Activated CD8-positive, alpha-beta memory T cell treated with anti-CD3 and anti-CD28 coated beads, Interleukin-2, amount 10 ng/mL, durations not matched to agents 7 days and 5 days (primary cell): ENCODE measurements at regions of chr18 and their contacts with region 1.

Region 1: DNA sequence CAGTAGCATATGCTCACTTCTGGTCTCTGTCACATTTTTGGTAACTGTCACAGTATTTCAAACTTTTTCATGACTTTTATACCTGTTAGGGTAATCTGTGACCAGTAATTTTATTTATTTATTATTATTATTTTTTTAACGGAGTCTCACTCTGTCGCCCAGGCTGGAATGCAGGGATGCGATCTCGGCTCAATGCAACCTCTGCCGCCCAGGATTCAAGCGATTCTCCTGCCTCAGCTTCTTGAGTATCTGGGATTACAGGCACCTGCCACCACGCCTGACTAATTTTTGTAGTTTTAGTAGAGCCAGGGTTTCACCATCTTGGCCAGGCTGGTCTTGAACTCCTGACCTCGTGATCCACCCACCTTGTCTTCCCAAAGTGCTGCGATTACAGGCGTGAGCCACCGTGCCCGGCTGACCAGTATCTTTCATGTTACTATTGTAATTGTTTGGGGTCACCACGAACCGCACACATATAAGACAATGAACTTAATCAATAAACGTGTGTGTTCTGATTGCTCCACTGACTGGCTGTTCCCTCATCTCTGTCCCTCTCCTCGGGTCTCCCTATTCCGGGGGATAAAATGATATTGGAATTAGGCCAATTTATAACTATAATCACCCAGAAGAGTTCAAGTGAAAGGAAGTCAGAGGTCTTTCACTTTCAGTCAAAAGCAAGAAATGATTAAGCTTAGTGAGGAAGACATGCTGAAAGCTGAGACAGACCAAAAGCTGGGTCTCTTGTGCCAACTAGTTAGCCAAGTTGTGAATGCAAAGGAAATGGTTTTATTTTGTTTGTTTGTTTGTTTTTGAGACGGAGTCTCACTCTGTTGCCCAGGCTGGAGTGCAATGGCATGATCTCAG is 22.9 kb downstream of the TGIF1 start:
- DNase-seq: no peak
- ATAC-seq: peak; percentile 84
- H3K4me3 Mint-ChIP-seq: no peak overlapping the region
- H3K27ac Mint-ChIP-seq: no peak overlapping the region
- H3K4me1 Mint-ChIP-seq: peaks cover 13% of the 10 kb centered on the region
- H3K27me3 Mint-ChIP-seq: peaks cover 9% of the 10 kb centered on the region

Region 2: GRCh38 chr18:3454365-3455089 is 18.4 kb before region 1 on chr18:
- CTCF ChIA-PET with region 1: interaction called, 11 read pairs
- DNase-seq: peak; percentile 63
- ATAC-seq: no peak
- H3K4me3 Mint-ChIP-seq: peak overlapping the region; percentile 87
- H3K27ac Mint-ChIP-seq: peak overlapping the region; percentile 83
- H3K4me1 Mint-ChIP-seq: peaks cover 55% of the 10 kb centered on the region
- H3K27me3 Mint-ChIP-seq: no peaks in the 10 kb centered on the region